Panc1 (cell line): ENCODE measurements at regions of chr3 and their contacts with region 1.

Region 1: DNA sequence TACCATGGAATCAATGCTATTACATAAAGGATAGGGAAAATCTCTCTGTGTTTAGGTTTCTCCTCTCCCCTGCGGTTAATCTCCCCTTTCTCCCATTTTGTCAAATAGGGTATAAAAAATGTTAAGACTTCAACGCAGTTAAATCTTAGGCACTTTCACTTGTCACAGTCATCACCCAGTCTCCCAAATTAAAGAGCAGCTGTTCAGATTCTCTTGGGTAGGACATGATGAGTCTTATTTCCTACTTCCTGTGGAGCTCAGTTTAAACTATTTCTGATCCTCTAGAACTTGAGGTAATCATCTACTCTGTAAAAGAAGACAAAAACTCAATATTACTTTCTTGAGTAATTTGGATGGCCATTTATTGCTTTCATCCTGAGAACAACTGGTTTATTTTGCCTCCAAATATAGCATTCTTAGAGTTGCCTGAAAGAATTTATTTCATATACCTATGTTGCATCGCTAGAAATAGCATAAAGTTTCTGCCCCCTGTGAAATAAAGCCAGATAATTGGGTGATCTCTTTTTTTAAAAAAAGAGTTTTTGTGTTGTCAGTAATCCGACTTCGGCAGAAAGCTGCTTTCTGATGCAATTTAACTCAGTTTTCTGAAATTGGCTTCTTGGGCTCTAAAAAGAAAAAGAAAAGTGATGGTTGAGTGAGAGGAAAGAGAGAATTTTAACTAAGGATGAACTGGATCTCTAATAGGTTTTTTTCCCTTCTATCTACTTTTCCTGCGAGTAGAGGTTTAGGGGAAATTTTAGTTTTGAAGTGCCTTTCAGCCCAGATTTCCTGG is 20.7 kb downstream of the RAP2B start:
- DNase-seq: no peak
- ATAC-seq: no peak
- H3K4me3 ChIP-seq: no peak overlapping the region
- H3K27ac ChIP-seq: no peak overlapping the region
- H3K4me1 ChIP-seq: no peaks in the 10 kb centered on the region
- H3K27me3 ChIP-seq: no peaks in the 10 kb centered on the region
- CTCF ChIP-seq: no peak

Region 2: DNA sequence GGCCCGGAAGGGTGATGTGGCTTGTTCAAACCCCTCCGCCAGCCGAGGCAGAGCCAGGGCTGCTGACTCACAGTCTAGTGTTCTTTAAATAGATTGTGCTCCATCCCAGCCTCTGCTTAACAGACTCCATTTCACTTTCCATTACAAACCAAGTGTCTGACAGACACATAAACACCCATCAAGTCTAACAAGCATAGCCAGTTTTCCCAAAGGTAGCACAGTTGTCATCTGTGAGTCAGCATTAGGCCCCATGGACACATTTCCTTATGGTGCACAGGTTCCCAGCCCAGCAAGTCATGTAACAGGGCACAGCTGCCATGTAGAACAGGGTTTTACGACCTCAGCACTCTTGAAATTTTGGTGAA is 130.6 kb before region 1 on chr3:
- CTCF ChIA-PET with region 1: no interaction called
- POLR2A ChIA-PET with region 1: interaction called, 10 read pairs
- in situ Hi-C with region 1: no loop called
- intact Hi-C with region 1: no loop called
- DNase-seq: peak; percentile 73
- ATAC-seq: peak; percentile 84
- H3K4me3 ChIP-seq: no peak overlapping the region
- H3K27ac ChIP-seq: no peak overlapping the region; the same call in 1 of the 2 replicates
- H3K4me1 ChIP-seq: no peaks in the 10 kb centered on the region; the same call in 1 of the 2 replicates
- H3K27me3 ChIP-seq: no peaks in the 10 kb centered on the region
- CTCF ChIP-seq: no peak

Region 3: DNA sequence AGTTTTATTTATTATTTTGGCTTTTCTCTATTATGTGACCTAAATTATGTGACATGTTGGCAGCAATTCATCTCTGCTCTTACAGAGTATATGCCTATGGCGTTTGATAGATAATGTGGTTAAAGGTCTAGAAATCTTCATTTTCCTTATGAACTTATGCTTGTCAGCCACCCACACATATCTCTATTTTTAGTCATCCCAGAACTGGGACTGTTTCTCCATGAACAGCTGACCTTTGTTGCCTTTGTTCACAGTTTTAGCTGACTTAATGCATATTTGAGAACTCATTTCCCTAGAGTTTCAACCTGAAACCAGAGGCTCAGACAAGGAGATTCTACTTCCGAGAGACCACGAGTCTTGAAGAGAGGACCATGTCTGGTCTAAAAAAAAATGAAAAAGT is 155.8 kb after region 1 on chr3:
- CTCF ChIA-PET with region 1: no interaction called
- POLR2A ChIA-PET with region 1: no interaction called
- in situ Hi-C with region 1: no loop called
- intact Hi-C with region 1: no loop called
- DNase-seq: no peak
- ATAC-seq: no peak
- H3K4me3 ChIP-seq: no peak overlapping the region
- H3K27ac ChIP-seq: no peak overlapping the region
- H3K4me1 ChIP-seq: no peaks in the 10 kb centered on the region
- H3K27me3 ChIP-seq: no peaks in the 10 kb centered on the region
- CTCF ChIP-seq: no peak